ENCODE measurements at regions of chr1 and their contacts with region 1.

Region 1: GRCh38 chr1:77533660-77534305 is 148.7 kb downstream of the ZZZ3 start:
- DNase-seq: peak; percentile 42 to 83
- ATAC-seq: peak in 2 of 3 donors; percentile 75 to 76
- H3K4me3 ChIP-seq: no peak overlapping the region
- H3K4me3 Mint-ChIP-seq: peak overlapping the region; percentile 54
- H3K27ac ChIP-seq: no peak overlapping the region
- H3K27ac Mint-ChIP-seq: peak overlapping the region in 1 of 2 donors; percentile 41
- H3K4me1 ChIP-seq: peaks cover 9% of the 10 kb centered on the region
- H3K4me1 Mint-ChIP-seq: peaks cover 8 to 10% of the 10 kb centered on the region in 2 donors
- H3K27me3 ChIP-seq: no peaks in the 10 kb centered on the region
- H3K27me3 Mint-ChIP-seq: no peaks in the 10 kb centered on the region
- CTCF ChIP-seq: peak; percentile 76

Region 2: GRCh38 chr1:77281491-77282186 is 252.1 kb before region 1 on chr1 and contains the start of gene AK5:
- intact Hi-C with region 1: loop called (anchors 10 kb)
- DNase-seq: peak; percentile 33 to 60
- ATAC-seq: peak; percentile 64 to 74 (median 71)
- H3K4me3 ChIP-seq: peak within 1 kb of the TSS; percentile 75
- H3K4me3 Mint-ChIP-seq: peak within 1 kb of the TSS; percentile 82
- H3K27ac ChIP-seq: peak within 1 kb of the TSS; percentile 37
- H3K27ac Mint-ChIP-seq: no peak within 1 kb of the TSS
- H3K4me1 ChIP-seq: peaks cover 23% of the 10 kb centered on the region
- H3K4me1 Mint-ChIP-seq: peaks cover 22 to 31% of the 10 kb centered on the region in 2 donors
- H3K27me3 ChIP-seq: peaks cover 34% of the 10 kb centered on the region
- H3K27me3 Mint-ChIP-seq: peaks cover 10 to 22% of the 10 kb centered on the region in 2 donors
- CTCF ChIP-seq: no peak
- total RNA-seq, gene AK5: 9.4 to 29.8 (median 11.4) TPM

Measured in natural killer cell (primary cell).